Mammary epithelial cell (primary cell): ENCODE measurements at regions of chr7 and their contacts with region 1.

Region 1: DNA sequence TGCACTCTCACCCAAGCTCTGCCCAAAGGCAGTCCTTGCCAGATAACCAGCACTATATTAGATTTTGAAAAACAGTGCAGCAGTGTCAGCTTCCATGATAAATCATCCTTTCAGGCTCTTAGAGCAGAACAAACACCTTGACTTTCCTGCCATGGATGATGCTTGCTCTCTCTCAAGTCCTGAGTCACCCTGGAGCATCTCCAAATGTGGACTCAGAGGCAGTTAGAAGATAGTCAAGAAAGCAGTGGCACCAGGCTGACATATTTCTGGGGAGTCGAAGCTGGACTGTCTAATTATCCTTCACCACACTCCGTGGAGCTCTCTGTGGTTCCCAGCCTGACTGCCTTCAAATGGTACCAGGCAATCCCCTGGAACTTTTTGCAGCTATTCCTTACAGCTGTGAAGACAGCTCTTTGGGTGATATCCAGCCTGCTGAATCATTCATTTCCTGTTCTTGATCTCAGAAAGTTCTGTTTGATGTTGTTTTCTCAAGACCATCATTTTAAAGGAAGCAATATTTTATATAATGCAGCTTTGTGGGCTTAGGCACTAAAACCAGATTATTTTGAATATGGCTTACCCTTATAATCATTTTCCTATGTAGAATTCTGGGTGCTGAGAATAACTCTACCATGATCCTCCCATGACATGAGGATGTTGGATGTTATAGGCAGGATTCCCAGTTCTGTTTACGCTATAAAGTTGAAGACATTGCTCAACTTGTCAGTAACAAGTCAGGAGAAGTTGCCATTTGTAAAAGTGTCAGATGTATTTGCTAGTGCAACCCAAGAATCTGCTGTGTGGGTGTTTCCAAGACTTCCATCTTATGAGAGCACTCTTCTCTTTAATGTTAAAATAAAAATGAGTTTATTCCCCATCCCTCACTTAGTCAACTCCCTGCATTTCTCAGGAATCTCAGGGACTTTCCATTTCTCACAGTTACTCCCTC is 233.8 kb downstream of the C7orf25 start:
- DNase-seq: peak; percentile 91
- H3K4me3 ChIP-seq: no peak overlapping the region
- H3K27ac ChIP-seq: peak overlapping the region; percentile 1
- H3K4me1 ChIP-seq: peaks cover 23% of the 10 kb centered on the region
- H3K27me3 ChIP-seq: no peaks in the 10 kb centered on the region
- CTCF ChIP-seq: no peak

Region 2: GRCh38 chr7:42283553-42283952 is 394.5 kb before region 1 on chr7:
- CTCF ChIA-PET with region 1: no interaction called
- dilution Hi-C with region 1: no loop called
- in situ Hi-C with region 1: no loop called
- intact Hi-C with region 1: no loop called
- DNase-seq: peak; percentile 42
- H3K4me3 ChIP-seq: no peak overlapping the region
- H3K27ac ChIP-seq: no peak overlapping the region
- H3K4me1 ChIP-seq: no peaks in the 10 kb centered on the region
- H3K27me3 ChIP-seq: no peaks in the 10 kb centered on the region
- CTCF ChIP-seq: no peak

Region 3: GRCh38 chr7:42493436-42494238 is 184.4 kb before region 1 on chr7:
- CTCF ChIA-PET with region 1: no interaction called
- dilution Hi-C with region 1: no loop called
- in situ Hi-C with region 1: no loop called
- intact Hi-C with region 1: loop called (anchors 10 kb)
- DNase-seq: peak; percentile 81
- H3K4me3 ChIP-seq: peak overlapping the region; percentile 47 to 54 (median 49)
- H3K27ac ChIP-seq: peak overlapping the region; percentile 81
- H3K4me1 ChIP-seq: peaks cover 30% of the 10 kb centered on the region
- H3K27me3 ChIP-seq: no peaks in the 10 kb centered on the region
- CTCF ChIP-seq: no peak

Region 4: GRCh38 chr7:42590771-42591310 is 87.2 kb before region 1 on chr7:
- CTCF ChIA-PET with region 1: no interaction called
- dilution Hi-C with region 1: no loop called
- in situ Hi-C with region 1: no loop called
- intact Hi-C with region 1: loop called (anchors 10 kb)
- DNase-seq: no peak
- H3K4me3 ChIP-seq: no peak overlapping the region
- H3K27ac ChIP-seq: no peak overlapping the region
- H3K4me1 ChIP-seq: no peaks in the 10 kb centered on the region
- H3K27me3 ChIP-seq: no peaks in the 10 kb centered on the region
- CTCF ChIP-seq: no peak

Region 5: GRCh38 chr7:42690794-42691639 is 13.0 kb after region 1 on chr7:
- CTCF ChIA-PET with region 1: no interaction called
- dilution Hi-C with region 1: no loop called
- in situ Hi-C with region 1: no loop called
- intact Hi-C with region 1: no loop called
- DNase-seq: peak; percentile 57
- H3K4me3 ChIP-seq: no peak overlapping the region
- H3K27ac ChIP-seq: no peak overlapping the region
- H3K4me1 ChIP-seq: no peaks in the 10 kb centered on the region
- H3K27me3 ChIP-seq: no peaks in the 10 kb centered on the region
- CTCF ChIP-seq: peak; percentile 83 to 84

Region 6: GRCh38 chr7:42720876-42721796 is 43.1 kb after region 1 on chr7:
- CTCF ChIA-PET with region 1: no interaction called
- dilution Hi-C with region 1: no loop called
- in situ Hi-C with region 1: no loop called
- intact Hi-C with region 1: no loop called
- DNase-seq: no peak
- H3K4me3 ChIP-seq: no peak overlapping the region
- H3K27ac ChIP-seq: no peak overlapping the region
- H3K4me1 ChIP-seq: no peaks in the 10 kb centered on the region
- H3K27me3 ChIP-seq: no peaks in the 10 kb centered on the region
- CTCF ChIP-seq: no peak